Spleen (tissue), 13 donors: ENCODE measurements at regions of chr11 and their contacts with region 1.

Region 1: DNA sequence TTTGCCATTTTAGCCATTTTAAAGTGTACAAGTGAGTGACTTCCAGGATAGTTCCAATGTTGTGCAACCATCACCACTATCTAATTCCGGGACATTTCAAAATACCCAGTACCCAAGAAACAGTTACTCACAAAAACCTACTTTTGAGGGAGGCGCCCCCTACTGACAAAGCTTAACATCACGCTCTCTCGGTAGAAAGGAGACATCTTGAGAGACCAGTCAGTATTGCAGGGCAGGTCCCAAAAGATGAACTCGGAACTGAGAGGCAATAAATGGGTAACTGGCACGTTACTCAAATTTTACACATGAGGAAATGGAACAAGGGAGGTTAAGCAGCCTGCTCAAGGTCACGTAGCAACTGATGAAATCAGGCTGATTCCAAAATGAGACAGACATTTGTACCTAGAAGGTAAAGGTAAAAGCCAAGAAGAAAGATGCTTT is 50.0 kb upstream of the POU2AF1 start:
- DNase-seq: no peak
- H3K4me3 ChIP-seq: no peak overlapping the region
- H3K27ac ChIP-seq: no peak overlapping the region
- H3K4me1 ChIP-seq: peaks cover 0 to 4% (median 0%) of the 10 kb centered on the region in 6 donors
- H3K27me3 ChIP-seq: no peaks in the 10 kb centered on the region
- CTCF ChIP-seq: peak in 10 of 11 experiments; percentile 41 to 72 (median 61)
- POLR2A ChIP-seq: no peak

Region 2: GRCh38 chr11:111283945-111284481 is 145.1 kb before region 1 on chr11:
- intact Hi-C with region 1: loop called (anchors 5 kb)
- DNase-seq: peak; percentile 81
- H3K4me3 ChIP-seq: no peak overlapping the region
- H3K27ac ChIP-seq: no peak overlapping the region
- H3K4me1 ChIP-seq: peaks cover 0 to 16% (median 8%) of the 10 kb centered on the region in 6 donors
- H3K27me3 ChIP-seq: no peaks in the 10 kb centered on the region
- CTCF ChIP-seq: no peak
- POLR2A ChIP-seq: no peak

Region 3: DNA sequence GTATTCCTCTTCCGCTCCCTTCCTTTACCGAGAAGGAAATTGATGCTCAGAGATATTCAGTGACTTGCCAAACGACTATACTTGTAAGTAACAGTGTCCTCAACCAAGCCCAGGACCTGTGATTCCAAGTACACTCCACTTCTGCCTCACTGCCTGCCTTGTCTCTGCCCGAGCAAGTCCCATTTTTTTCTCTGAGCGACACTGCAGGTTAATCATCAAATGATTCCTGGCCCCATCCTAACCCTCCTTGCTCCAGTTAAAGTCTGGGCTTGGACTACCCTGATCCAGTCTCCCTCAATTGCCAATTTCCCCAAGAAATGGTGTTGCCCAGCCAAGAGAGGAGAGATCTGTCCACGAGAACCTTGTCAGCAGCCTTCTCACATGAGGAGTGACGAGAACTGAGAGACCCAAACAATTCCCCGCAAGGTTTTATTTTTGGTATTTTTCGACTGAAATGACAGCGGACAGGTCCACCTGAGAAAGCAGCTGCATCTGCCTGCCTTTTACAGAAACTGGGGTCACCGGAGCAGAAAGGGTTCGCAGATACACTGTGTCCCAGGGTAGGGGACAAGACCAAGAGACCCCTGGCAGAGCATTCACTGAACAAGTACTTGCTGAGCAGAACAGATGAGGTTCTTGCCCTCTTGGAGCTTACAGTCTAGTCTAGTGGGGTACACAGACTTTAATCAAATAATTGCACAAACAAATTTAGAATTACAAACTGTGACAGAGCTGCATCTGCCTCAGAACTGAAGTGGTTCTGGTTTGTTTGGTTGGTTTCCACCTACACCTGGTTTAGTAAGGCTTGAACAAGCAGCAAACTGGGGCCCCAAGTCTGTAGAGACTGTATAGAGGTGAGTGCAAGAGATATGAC is 61.4 kb before region 1 on chr11:
- intact Hi-C with region 1: no loop called
- DNase-seq: no peak
- H3K4me3 ChIP-seq: peak overlapping the region in 1 of 8 donors; percentile 42
- H3K27ac ChIP-seq: peak overlapping the region in 7 of 8 donors; percentile 22 to 81 (median 58)
- H3K4me1 ChIP-seq: peaks cover 0 to 92% (median 34%) of the 10 kb centered on the region in 6 donors
- H3K27me3 ChIP-seq: no peaks in the 10 kb centered on the region
- CTCF ChIP-seq: no peak
- POLR2A ChIP-seq: no peak

Region 4: GRCh38 chr11:111707039-111707690 is 278.1 kb after region 1 on chr11:
- intact Hi-C with region 1: no loop called
- DNase-seq: no peak
- H3K4me3 ChIP-seq: no peak overlapping the region
- H3K27ac ChIP-seq: no peak overlapping the region
- H3K4me1 ChIP-seq: no peaks in the 10 kb centered on the region
- H3K27me3 ChIP-seq: no peaks in the 10 kb centered on the region
- CTCF ChIP-seq: no peak
- POLR2A ChIP-seq: no peak